Ovary (tissue), 10 donors: ENCODE measurements at regions of chr1 and their contacts with region 1.

Region 1: DNA sequence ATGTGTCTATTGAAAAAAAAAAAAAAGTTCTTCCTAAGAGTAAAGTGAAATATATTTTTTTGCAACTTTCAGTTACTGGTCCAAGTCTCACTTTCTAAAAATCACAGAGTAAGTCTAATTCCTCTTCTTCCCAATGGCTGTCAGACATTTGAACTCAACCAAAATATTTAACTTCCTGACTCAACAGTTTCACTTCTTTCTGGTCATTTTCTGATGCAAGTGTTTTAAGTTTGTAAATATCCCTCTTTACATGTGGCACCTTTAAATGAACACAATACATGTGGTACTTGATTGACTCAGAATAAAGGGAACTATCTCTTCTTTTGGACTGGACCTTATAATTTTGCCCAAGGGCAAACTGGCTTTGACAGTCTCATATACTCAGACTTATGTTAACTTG is 76.7 kb downstream of the ASH1L start:
- DNase-seq: no peak
- H3K4me3 ChIP-seq: no peak overlapping the region
- H3K27ac ChIP-seq: no peak overlapping the region
- H3K4me1 ChIP-seq: peaks cover 2% of the 10 kb centered on the region
- H3K27me3 ChIP-seq: no peaks in the 10 kb centered on the region
- CTCF ChIP-seq: no peak
- EP300 ChIP-seq: no peak
- POLR2A ChIP-seq: no peak

Region 2: GRCh38 chr1:155295183-155295941 is 190.6 kb before region 1 on chr1:
- intact Hi-C with region 1: no loop called
- DNase-seq: no peak
- H3K4me3 ChIP-seq: no peak overlapping the region
- H3K27ac ChIP-seq: no peak overlapping the region
- H3K4me1 ChIP-seq: peaks cover 3% of the 10 kb centered on the region
- H3K27me3 ChIP-seq: no peaks in the 10 kb centered on the region
- CTCF ChIP-seq: no peak
- EP300 ChIP-seq: no peak
- POLR2A ChIP-seq: no peak

Region 3: DNA sequence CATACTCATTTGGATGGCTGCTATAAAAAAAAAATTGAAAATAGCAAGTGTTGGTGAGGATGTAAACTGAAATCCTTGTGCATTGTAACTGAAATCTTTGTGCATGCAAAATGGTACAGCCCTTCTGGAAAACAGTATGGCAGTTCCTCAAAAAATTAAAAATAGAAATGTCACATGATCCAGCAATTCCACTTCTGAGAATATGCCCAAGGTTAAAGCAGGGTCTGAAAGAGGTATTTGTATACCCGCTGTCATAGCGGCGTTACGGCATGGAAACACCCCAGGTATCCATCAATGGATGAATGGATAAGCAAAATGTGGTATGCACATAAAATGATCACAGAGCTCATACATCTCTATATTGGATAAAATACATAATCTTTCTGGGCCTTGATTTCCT is 48.5 kb before region 1 on chr1:
- intact Hi-C with region 1: loop called in 1 of 4 experiments (anchors 2 kb)
- DNase-seq: no peak
- H3K4me3 ChIP-seq: no peak overlapping the region
- H3K27ac ChIP-seq: no peak overlapping the region
- H3K4me1 ChIP-seq: no peaks in the 10 kb centered on the region
- H3K27me3 ChIP-seq: no peaks in the 10 kb centered on the region
- CTCF ChIP-seq: no peak
- EP300 ChIP-seq: no peak
- POLR2A ChIP-seq: no peak